ENCODE measurements at regions of chr1 and their contacts with region 1.

Region 1: GRCh38 chr1:9455487-9456234 is 83.6 kb upstream of the SLC25A33 start:
- DNase-seq: peak; percentile 72
- H3K4me3 ChIP-seq: no peak overlapping the region
- H3K27ac ChIP-seq: no peak overlapping the region
- H3K4me1 ChIP-seq: peaks cover 0 to 3% (median 2%) of the 10 kb centered on the region in 4 donors
- H3K27me3 ChIP-seq: no peaks in the 10 kb centered on the region
- CTCF ChIP-seq: peak; percentile 75 to 90 (median 84)
- EP300 ChIP-seq: no peak
- POLR2A ChIP-seq: no peak

Region 2: DNA sequence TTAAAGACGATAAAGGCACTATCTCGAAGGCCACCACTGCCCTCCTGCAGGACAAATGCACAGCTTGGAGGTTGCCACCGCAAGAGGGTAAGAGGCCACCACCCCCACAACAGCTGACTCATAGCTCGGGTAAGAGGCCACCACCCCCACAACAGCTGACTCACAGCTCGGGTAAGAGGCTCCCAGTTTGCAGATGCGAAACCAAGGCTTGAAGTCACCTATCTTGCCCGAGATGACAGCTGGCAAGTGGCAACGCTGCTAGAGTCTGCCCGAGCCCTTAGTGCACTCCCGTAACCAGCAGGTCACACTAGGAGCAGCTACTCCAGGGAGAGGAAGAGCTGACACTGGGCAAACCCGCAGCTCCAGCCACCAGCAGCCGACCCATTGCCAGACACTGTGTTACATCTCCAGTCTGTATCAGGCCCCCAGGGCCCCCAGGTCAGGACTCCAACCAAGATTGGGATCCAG is 180.1 kb before region 1 on chr1:
- in situ Hi-C with region 1: loop called (anchors 10 to 25 kb)
- intact Hi-C with region 1: no loop called
- DNase-seq: peak; percentile 59
- H3K4me3 ChIP-seq: no peak overlapping the region
- H3K27ac ChIP-seq: peak overlapping the region in 1 of 4 donors; percentile 28
- H3K4me1 ChIP-seq: peaks cover 11 to 49% (median 27%) of the 10 kb centered on the region in 4 donors
- H3K27me3 ChIP-seq: no peaks in the 10 kb centered on the region
- CTCF ChIP-seq: no peak
- EP300 ChIP-seq: no peak
- POLR2A ChIP-seq: no peak

Region 3: GRCh38 chr1:9317591-9318417 is 137.9 kb before region 1 on chr1:
- in situ Hi-C with region 1: no loop called
- intact Hi-C with region 1: no loop called
- DNase-seq: peak; percentile 44
- H3K4me3 ChIP-seq: peak overlapping the region in 1 of 4 donors; percentile 14
- H3K27ac ChIP-seq: peak overlapping the region; percentile 59 to 77 (median 68)
- H3K4me1 ChIP-seq: peaks cover 19 to 82% (median 53%) of the 10 kb centered on the region in 4 donors
- H3K27me3 ChIP-seq: no peaks in the 10 kb centered on the region
- CTCF ChIP-seq: no peak
- EP300 ChIP-seq: peak; percentile 75
- POLR2A ChIP-seq: no peak

Region 4: DNA sequence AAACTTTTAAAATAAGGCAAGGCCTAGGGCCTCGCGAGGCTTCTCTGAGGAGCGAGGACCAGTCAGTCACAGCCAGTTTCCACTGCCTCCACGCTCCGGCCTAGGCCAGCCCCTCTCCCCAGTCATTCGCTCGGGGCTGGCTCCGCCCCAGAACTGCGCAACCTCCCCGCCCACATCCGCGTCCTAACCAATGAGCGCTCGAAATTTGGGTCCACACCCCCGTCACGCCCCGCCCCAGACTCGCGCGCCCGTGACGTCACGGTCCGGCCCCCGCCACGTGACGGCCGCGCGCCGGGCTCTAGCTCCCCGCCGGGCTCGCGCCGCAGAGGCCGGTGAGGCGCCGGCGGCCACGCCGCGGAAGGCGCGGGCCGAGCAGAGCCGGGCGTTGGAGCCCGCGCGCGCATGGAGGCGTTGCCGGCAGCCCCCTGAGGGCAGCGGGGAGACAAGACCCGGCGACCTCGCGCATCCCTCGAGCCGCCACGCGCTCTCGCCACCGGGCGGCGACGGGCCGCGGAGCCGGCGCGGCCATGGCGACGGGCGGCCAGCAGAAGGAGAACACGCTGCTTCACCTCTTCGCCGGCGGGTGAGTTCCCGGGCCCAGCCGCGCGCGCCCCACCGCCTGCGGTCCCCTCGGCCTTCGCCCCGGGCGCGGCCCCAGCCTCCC is 83.6 kb after region 1 on chr1 and contains the start of gene SLC25A33:
- in situ Hi-C with region 1: no loop called
- intact Hi-C with region 1: no loop called
- DNase-seq: peak; percentile 99
- H3K4me3 ChIP-seq: peak within 1 kb of the TSS; percentile 36 to 93 (median 66)
- H3K27ac ChIP-seq: peak within 1 kb of the TSS; percentile 89 to 97 (median 94)
- H3K4me1 ChIP-seq: peaks cover 7 to 42% (median 28%) of the 10 kb centered on the region in 4 donors
- H3K27me3 ChIP-seq: no peaks in the 10 kb centered on the region
- CTCF ChIP-seq: no peak
- EP300 ChIP-seq: no peak
- POLR2A ChIP-seq: no peak
- total RNA-seq, gene SLC25A33: 4.9 to 12.5 (median 6.6) TPM

Region 5: GRCh38 chr1:9659328-9659998 is 203.8 kb after region 1 on chr1:
- in situ Hi-C with region 1: no loop called
- intact Hi-C with region 1: no loop called
- DNase-seq: no peak
- H3K4me3 ChIP-seq: no peak overlapping the region
- H3K27ac ChIP-seq: no peak overlapping the region
- H3K4me1 ChIP-seq: no peaks in the 10 kb centered on the region
- H3K27me3 ChIP-seq: peaks cover 6% of the 10 kb centered on the region
- CTCF ChIP-seq: no peak
- EP300 ChIP-seq: no peak
- POLR2A ChIP-seq: no peak

Measured in transverse colon (tissue), 4 donors.